ENCODE measurements at regions of chr10 and their contacts with region 1.

Region 1: DNA sequence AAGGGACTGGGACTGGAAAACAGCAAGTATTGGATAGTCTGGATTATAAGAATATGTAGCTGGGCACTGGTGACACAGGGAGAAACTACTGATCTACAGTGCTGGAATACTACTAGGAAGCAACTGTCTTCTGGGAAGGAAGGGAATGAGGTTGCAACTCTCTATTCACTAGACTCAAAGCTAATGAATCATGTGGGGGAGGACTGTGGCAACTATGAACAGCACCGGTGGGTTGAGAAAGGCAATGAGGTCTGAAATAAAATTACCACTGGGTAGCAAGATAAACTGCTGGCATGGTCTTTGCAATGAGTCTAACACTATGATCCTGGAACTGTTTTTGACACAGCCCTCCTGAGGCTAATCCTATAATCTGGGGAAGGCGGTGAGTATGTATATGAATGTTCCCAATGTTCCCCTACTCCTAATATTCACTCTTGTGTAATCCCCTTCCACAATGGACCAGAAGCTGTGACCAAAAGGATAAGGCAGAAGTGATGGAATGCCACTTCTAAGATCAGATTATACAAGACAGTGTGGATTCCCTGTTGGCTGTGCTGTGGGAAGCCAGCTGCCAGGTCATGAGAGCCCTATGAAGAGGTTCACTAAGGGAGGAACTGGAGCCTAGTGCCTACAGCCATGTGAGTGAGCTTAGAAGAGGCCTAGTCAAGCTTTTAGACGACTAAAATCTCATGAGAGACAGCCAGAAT is 101.3 kb upstream of the DNAJB12 start:
- DNase-seq: no peak
- ATAC-seq: peak; percentile 73
- H3K4me3 ChIP-seq: no peak overlapping the region
- H3K27ac ChIP-seq: no peak overlapping the region
- H3K4me1 ChIP-seq: no peaks in the 10 kb centered on the region
- H3K27me3 ChIP-seq: no peaks in the 10 kb centered on the region
- CTCF ChIP-seq: no peak

Region 2: DNA sequence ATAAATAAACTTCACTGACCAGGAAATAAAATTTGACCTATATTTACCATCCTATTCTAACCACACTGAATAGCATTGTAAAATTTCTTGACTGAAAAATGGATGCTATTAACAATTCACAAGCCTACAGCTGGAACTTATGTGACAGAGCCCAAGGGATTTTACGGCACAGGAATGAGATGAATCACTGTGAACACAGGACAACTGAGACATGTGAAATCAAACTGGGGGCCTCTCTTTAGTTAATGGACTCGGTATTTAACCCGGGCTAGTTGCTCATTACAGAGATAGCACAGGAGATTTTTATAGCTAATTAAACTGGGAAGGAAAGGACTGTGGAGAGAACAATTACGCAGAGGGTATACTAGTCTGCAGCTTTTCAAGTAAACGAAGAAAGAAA is 69.2 kb after region 1 on chr10:
- CTCF ChIA-PET with region 1: interaction called, 10 read pairs
- POLR2A ChIA-PET with region 1: interaction called, 4 read pairs
- in situ Hi-C with region 1: no loop called
- intact Hi-C with region 1: no loop called
- DNase-seq: no peak
- ATAC-seq: 0 out of 2 replicates have a peak, but pooled peaks have one; percentile 21
- H3K4me3 ChIP-seq: no peak overlapping the region
- H3K27ac ChIP-seq: no peak overlapping the region
- H3K4me1 ChIP-seq: 0 out of 2 replicates have a peak, but pooled peaks cover 4% of the 10 kb centered on the region
- H3K27me3 ChIP-seq: no peaks in the 10 kb centered on the region
- CTCF ChIP-seq: no peak